H1 (cell line): ENCODE measurements at regions of chr17 and their contacts with region 1.

Region 1: DNA sequence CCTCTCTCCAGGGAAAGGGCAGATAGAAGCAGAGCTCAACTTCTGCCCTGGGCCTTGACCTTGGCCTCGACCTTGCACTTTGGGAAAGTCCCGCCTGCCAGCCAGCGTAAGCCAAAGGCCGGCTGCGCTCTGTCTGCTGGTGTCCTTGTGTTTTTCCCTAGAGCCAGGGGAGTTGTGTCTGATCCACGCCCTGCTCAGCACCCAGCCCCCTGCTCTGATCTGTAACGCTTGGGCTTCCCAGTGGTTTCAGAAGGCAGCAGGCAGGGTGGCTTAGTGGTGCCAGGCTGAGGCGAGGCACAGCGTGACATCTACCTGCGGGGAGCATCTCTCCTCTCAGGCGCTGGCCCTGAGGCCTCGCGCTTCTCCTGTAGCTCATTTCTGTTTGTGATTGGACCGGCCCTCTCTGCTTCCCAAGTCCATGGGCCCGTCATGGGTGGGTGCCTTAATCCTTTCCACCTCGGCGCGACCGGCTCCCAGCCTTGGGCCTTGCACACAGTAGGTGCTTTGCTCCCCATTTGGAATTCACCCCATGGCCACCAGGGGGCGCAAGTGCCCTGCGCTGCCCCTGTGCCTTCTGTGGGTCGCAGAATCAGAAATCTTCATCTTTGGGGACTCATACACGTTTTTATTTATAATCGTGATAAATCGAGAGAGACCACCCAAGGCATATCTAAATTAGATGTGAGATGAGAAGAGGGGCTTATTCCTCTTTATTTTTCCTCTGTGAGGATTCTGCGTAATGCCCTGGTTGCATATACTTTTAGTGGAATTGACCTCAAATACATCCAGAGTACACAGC is 24.2 kb downstream of the SGSH start:
- DNase-seq: peak in 1 of 2 experiments; percentile 90
- H3K4me3 ChIP-seq: no peak overlapping the region
- H3K27ac ChIP-seq: no peak overlapping the region; the same call in 1 of the 2 replicates
- H3K4me1 ChIP-seq: peaks cover 0 to 4% (median 0%) of the 10 kb centered on the region in 4 experiments; a peak in 2 of 7 replicates
- H3K27me3 ChIP-seq: no peaks in the 10 kb centered on the region; a peak in 1 of 7 replicates
- CTCF ChIP-seq: peak; percentile 91 to 92 (median 91)
- EP300 ChIP-seq: no peak
- POLR2A ChIP-seq: no peak
- RAD21 ChIP-seq: peak; percentile 94 to 96

Region 2: DNA sequence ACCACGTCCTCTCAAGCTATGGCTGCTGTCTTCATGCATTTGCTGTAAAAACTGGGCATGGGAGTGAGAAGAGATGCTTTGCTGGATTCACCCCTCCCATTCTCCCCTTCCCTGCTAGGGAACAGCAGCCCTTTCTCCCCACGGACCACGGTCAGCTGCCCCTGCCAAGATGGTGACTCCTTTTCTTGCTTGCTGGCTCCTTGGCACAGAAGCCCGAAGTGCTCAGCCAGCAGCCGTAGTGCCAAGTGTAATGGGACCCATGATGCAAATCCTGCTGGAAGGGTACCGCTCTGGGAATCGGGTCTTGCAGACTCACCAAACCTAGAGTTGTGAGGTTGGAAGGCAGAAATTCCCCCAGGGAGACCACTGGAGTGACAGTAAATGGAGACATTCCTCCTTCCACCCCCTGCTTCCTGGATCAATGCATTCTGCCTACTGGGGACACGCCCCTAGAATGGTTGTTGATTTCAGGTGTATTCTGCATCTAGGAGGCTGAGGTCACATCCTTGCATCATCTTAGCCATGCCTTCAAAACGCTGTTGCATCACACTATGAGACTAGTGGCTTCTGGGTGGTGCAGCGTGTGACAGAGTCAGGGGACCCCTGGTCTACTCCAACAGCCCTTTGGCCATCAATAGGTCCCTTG is 293.7 kb before region 1 on chr17:
- CTCF ChIA-PET with region 1: no interaction called
- POLR2A ChIA-PET with region 1: no interaction called
- DNase-seq: no peak
- H3K4me3 ChIP-seq: no peak overlapping the region; a peak in 1 of 8 replicates
- H3K27ac ChIP-seq: no peak overlapping the region
- H3K4me1 ChIP-seq: peaks cover 0 to 5% (median 0%) of the 10 kb centered on the region in 4 experiments; a peak in 2 of 7 replicates
- H3K27me3 ChIP-seq: no peaks in the 10 kb centered on the region; a peak in 2 of 7 replicates
- CTCF ChIP-seq: no peak
- EP300 ChIP-seq: no peak
- POLR2A ChIP-seq: no peak
- RAD21 ChIP-seq: no peak

Region 3: DNA sequence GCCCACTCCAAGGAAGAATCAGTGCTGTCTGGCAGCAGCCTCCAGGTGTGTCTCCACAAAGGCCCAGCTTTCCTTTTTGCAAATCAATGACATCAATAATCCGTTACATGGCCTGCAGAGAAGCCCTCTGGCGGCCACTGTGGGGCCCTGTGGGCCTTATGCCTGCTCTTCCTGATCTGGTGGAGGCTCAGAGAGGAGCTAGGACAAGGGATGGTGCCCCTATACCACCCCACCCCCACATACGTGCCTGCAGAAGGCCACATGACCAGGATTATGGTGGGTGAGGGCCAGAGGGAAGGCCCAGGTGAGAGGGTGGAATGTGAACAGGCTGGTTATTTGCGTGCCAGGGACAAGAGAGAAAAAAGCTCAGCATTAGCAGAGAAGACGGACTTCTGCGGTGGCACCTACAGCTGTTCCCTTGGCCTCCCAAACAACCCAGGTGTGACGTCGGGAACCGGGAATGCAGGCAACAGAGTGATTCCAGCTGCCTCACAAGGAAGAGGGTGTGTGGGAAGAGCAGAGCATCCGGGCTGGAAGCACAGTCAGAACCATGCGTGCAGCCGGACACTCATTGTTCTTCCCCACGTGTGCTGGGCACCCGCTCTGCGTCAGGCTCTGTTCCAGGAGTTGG is 71.5 kb before region 1 on chr17:
- CTCF ChIA-PET with region 1: interaction called, 13 read pairs
- POLR2A ChIA-PET with region 1: no interaction called
- DNase-seq: peak; percentile 51 to 71
- H3K4me3 ChIP-seq: peak overlapping the region in 3 of 4 experiments; percentile 29 to 35 (median 31); a peak in 5 of 8 replicates
- H3K27ac ChIP-seq: peak overlapping the region; percentile 68
- H3K4me1 ChIP-seq: peaks cover 3 to 18% (median 12%) of the 10 kb centered on the region in 4 experiments
- H3K27me3 ChIP-seq: no peaks in the 10 kb centered on the region
- CTCF ChIP-seq: peak; percentile 70 to 82 (median 82)
- EP300 ChIP-seq: 0 out of 3 replicates have a peak, but pooled peaks of 1 of the 2 experiments have one; percentile 15
- POLR2A ChIP-seq: peak in 1 of 2 experiments; percentile 65; a peak in 2 of 3 replicates
- RAD21 ChIP-seq: peak; percentile 58 to 70

Region 4: DNA sequence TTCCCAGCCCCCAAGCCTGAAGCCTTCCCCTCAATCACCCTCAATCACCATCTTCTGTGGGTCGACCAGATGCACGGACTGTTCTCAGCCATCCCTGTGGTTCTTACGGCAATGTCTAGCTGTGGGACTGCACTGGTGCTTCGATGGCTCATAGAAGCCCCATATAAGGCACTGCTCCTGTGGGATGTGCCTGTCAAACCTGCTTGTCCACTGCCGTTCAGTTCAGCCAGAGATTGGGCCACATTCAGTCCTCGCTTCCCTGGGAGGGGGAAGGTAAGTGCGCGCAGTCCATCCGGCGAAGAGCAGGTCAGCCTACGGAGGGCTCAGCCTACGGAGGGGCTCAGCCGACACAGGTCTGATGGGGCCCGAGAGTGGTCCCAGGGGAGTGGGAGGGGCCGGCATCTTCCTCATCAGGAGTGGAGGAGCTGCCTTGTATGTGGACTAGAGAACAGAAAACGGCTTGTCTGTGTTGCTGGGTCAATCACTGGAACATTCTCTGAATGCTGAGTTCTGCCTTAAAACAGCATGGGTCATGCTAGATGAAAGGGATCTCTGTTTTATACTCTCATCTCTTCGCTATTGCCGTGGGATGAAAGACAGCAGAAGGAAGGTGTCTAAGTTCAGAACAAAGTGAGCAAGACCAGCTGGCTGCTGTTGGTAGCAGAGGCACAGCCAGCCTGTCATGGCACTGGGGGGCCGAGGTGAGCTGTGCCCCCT is 26.0 kb before region 1 on chr17 and contains the start of gene CARD14:
- CTCF ChIA-PET with region 1: interaction called, 16 read pairs
- POLR2A ChIA-PET with region 1: no interaction called
- DNase-seq: no peak
- H3K4me3 ChIP-seq: no peak within 1 kb of the TSS
- H3K27ac ChIP-seq: no peak within 1 kb of the TSS
- H3K4me1 ChIP-seq: peaks cover 0 to 4% (median 0%) of the 10 kb centered on the region in 4 experiments; a peak in 1 of 7 replicates
- H3K27me3 ChIP-seq: no peaks in the 10 kb centered on the region; a peak in 1 of 7 replicates
- CTCF ChIP-seq: no peak
- EP300 ChIP-seq: no peak
- POLR2A ChIP-seq: no peak
- RAD21 ChIP-seq: no peak
- total RNA-seq, gene CARD14: not detected in 2 replicates

Region 5: DNA sequence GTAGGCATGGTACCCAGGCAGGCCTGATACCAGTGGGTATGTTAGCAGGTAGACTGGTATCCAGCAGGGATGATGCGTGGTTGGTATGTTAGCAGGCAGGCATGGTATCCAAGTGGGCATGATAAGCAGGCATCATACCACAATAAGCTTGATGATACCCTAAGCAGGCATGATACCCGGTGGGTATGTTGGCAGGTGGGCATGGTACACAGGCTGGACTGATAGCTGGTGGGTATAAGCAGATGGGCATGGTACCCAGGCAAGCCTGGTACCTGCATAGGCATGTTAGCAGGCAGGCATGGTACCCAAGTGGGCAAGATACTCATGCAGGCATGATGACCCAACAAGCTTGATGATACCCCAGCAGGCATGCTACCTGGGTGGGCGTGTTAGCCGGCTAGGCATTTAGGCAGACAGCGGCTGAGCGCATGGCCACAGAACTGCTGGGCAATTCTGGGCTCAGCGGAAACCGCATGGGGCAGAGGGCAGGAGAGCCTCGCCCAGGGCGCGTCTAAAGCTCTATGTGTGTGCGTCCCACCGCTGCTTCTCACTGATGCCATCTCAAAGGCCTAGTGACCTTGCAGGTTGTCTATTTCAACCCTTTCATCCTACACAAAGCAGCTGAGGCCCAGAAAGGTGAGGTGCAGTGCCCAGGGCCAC is 21.9 kb after region 1 on chr17:
- CTCF ChIA-PET with region 1: interaction called, 11 read pairs
- POLR2A ChIA-PET with region 1: interaction called, 3 read pairs
- DNase-seq: no peak
- H3K4me3 ChIP-seq: no peak overlapping the region
- H3K27ac ChIP-seq: no peak overlapping the region
- H3K4me1 ChIP-seq: peaks cover 0 to 6% (median 5%) of the 10 kb centered on the region in 4 experiments; a peak in 4 of 7 replicates
- H3K27me3 ChIP-seq: no peaks in the 10 kb centered on the region; a peak in 1 of 7 replicates
- CTCF ChIP-seq: no peak
- EP300 ChIP-seq: no peak
- POLR2A ChIP-seq: no peak
- RAD21 ChIP-seq: no peak

Region 6: DNA sequence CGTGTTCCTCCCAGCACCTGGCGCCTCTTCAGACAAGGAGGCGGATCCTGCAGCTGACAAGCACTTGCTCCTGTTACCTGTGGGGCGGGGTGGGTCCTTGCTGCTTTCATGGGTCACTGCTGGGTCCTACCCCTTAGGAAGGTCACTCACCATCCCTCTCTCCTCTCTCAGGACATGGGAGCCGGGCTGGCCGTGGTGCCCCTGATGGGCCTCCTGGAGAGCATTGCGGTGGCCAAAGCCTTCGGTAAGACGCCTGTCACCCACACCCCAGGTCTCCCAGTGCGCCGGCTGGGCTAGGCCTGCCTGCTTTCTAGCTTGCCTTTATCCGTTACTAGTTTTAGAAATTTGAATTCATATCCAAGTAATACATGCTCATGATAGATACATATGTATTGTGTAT is 41.4 kb after region 1 on chr17:
- CTCF ChIA-PET with region 1: interaction called, 15 read pairs
- POLR2A ChIA-PET with region 1: no interaction called
- DNase-seq: no peak
- H3K4me3 ChIP-seq: no peak overlapping the region
- H3K27ac ChIP-seq: no peak overlapping the region
- H3K4me1 ChIP-seq: no peaks in the 10 kb centered on the region
- H3K27me3 ChIP-seq: no peaks in the 10 kb centered on the region
- CTCF ChIP-seq: no peak
- EP300 ChIP-seq: no peak
- POLR2A ChIP-seq: no peak
- RAD21 ChIP-seq: no peak

Region 7: GRCh38 chr17:80279895-80280294 is 84.0 kb after region 1 on chr17:
- CTCF ChIA-PET with region 1: interaction called, 23 read pairs
- POLR2A ChIA-PET with region 1: no interaction called
- DNase-seq: no peak
- H3K4me3 ChIP-seq: no peak overlapping the region
- H3K27ac ChIP-seq: no peak overlapping the region
- H3K4me1 ChIP-seq: peaks cover 0 to 6% (median 3%) of the 10 kb centered on the region in 4 experiments; a peak in 4 of 7 replicates
- H3K27me3 ChIP-seq: no peaks in the 10 kb centered on the region
- CTCF ChIP-seq: no peak
- EP300 ChIP-seq: no peak
- POLR2A ChIP-seq: no peak
- RAD21 ChIP-seq: no peak

Region 8: DNA sequence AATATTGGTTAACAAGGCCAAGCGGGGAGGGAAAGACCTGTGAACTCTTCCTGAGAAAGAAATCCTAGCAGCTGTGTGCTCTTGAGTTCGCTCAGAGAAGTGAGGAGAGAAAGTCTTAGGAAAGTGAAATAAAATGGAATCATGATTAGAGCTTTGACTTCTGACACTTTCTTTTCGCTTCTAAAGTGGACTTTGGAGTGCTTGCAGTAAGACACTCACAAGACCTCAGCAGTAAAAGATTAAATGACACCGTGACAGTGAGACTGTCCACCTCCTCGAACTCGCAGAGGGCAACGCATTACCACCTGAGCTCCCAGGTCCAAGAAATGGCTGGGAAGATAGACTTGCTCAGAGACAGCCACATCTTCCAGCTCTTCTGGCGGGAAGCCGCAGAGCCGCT is 135.9 kb after region 1 on chr17:
- CTCF ChIA-PET with region 1: interaction called, 11 read pairs
- POLR2A ChIA-PET with region 1: interaction called, 3 read pairs
- DNase-seq: no peak
- H3K4me3 ChIP-seq: no peak overlapping the region
- H3K27ac ChIP-seq: no peak overlapping the region
- H3K4me1 ChIP-seq: no peaks in the 10 kb centered on the region
- H3K27me3 ChIP-seq: no peaks in the 10 kb centered on the region
- CTCF ChIP-seq: no peak
- EP300 ChIP-seq: no peak
- POLR2A ChIP-seq: no peak
- RAD21 ChIP-seq: no peak